AG04450 (cell line): ENCODE measurements at regions of chr10 and their contacts with region 1.

Region 1: DNA sequence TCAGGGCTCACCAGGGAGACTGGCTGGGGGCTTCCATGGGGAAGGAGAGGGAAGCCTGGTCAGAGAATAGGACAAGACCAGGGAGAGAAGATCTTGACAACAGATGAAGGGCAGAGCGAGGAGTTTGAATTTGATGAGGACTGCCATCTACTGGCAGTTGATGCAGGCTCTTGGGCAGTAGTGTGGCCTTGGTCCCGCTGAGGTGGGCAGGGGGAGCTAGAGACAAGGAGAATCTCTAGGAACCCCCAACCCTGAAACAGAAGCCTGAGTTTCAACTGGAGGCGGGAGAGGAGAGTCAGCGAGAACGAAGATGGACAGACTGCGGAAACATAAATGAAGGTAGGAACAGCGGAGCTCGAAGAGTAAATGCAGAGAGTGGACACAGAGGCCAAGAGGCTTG is 81.0 kb downstream of the PPP1R3C start:
- DNase-seq: peak; percentile 34
- H3K4me3 ChIP-seq: no peak overlapping the region
- H3K27ac ChIP-seq: no peak overlapping the region
- H3K27me3 ChIP-seq: no peaks in the 10 kb centered on the region
- CTCF ChIP-seq: peak; percentile 89

Region 2: GRCh38 chr10:91163269-91163868 is 388.5 kb before region 1 on chr10:
- CTCF ChIA-PET with region 1: no interaction called
- POLR2A ChIA-PET with region 1: no interaction called
- DNase-seq: no peak
- H3K4me3 ChIP-seq: peak overlapping the region; percentile 75
- H3K27ac ChIP-seq: peak overlapping the region; percentile 52
- H3K27me3 ChIP-seq: peaks cover 5% of the 10 kb centered on the region
- CTCF ChIP-seq: no peak

Region 3: DNA sequence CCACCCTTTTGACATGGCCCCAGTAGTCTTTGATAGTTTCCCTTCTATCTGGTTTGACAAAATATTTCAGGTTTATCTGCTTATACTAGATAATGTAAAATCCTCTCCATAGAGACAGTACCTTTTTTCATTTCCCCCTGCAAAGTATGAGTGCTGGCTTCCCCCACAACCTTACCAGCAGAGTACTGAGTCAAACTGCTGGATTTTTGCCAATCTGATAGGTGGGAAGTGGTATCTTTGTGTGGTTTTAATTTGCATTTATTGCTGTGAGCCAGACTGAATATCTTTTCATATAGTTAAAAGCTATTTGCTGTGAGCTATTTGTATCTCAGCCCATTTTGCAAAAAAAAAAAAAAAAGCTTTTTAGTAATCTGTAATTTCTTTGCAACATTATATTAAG is 173.8 kb before region 1 on chr10:
- CTCF ChIA-PET with region 1: no interaction called
- POLR2A ChIA-PET with region 1: no interaction called
- DNase-seq: no peak
- H3K4me3 ChIP-seq: no peak overlapping the region
- H3K27ac ChIP-seq: no peak overlapping the region
- H3K27me3 ChIP-seq: no peaks in the 10 kb centered on the region
- CTCF ChIP-seq: no peak

Region 4: GRCh38 chr10:91493313-91493712 is 58.5 kb before region 1 on chr10:
- CTCF ChIA-PET with region 1: interaction called, 24 read pairs
- POLR2A ChIA-PET with region 1: no interaction called
- DNase-seq: no peak
- H3K4me3 ChIP-seq: no peak overlapping the region
- H3K27ac ChIP-seq: no peak overlapping the region
- H3K27me3 ChIP-seq: no peaks in the 10 kb centered on the region
- CTCF ChIP-seq: peak; percentile 38

Region 5: GRCh38 chr10:91541481-91541880 is 10.4 kb before region 1 on chr10:
- CTCF ChIA-PET with region 1: interaction called, 15 read pairs
- POLR2A ChIA-PET with region 1: no interaction called
- DNase-seq: peak; percentile 4
- H3K4me3 ChIP-seq: no peak overlapping the region
- H3K27ac ChIP-seq: no peak overlapping the region
- H3K27me3 ChIP-seq: no peaks in the 10 kb centered on the region
- CTCF ChIP-seq: no peak

Region 6: GRCh38 chr10:91582153-91582554 is 30.3 kb after region 1 on chr10:
- CTCF ChIA-PET with region 1: no interaction called
- POLR2A ChIA-PET with region 1: no interaction called
- DNase-seq: no peak
- H3K4me3 ChIP-seq: no peak overlapping the region
- H3K27ac ChIP-seq: no peak overlapping the region
- H3K27me3 ChIP-seq: no peaks in the 10 kb centered on the region
- CTCF ChIP-seq: no peak

Region 7: DNA sequence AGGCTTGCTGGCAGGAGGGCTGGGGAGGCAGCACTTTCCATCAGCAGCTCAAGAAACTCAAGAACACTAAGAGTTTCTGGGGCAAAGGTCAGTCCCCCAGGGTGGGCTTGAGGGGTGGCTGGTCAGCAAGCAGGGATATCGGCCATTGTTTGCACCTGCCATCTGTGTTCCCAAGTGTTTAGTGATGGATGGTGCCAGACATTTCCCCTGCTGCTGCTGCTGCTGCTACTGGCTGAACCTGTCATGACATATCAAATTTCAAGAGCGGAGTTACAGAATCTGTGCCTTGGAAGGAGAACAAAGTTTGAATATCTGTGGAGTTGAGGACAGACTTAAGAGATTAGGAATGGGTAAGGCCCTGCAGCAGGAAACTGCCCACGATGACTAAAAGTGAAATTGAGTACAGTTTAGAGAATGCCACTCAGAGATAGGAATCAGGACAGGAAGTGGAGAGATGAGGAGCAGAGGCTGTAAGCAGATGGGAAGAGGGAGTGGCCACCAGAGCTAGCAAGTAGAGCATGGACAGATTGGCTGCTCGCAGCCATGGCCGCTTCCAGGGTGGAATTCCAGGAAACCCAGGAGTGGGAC is 120.3 kb after region 1 on chr10:
- CTCF ChIA-PET with region 1: no interaction called
- POLR2A ChIA-PET with region 1: no interaction called
- DNase-seq: peak; percentile 37
- H3K4me3 ChIP-seq: no peak overlapping the region
- H3K27ac ChIP-seq: no peak overlapping the region
- H3K27me3 ChIP-seq: no peaks in the 10 kb centered on the region
- CTCF ChIP-seq: no peak